ENCODE measurements at regions of chr18 and their contacts with region 1.

Region 1: DNA sequence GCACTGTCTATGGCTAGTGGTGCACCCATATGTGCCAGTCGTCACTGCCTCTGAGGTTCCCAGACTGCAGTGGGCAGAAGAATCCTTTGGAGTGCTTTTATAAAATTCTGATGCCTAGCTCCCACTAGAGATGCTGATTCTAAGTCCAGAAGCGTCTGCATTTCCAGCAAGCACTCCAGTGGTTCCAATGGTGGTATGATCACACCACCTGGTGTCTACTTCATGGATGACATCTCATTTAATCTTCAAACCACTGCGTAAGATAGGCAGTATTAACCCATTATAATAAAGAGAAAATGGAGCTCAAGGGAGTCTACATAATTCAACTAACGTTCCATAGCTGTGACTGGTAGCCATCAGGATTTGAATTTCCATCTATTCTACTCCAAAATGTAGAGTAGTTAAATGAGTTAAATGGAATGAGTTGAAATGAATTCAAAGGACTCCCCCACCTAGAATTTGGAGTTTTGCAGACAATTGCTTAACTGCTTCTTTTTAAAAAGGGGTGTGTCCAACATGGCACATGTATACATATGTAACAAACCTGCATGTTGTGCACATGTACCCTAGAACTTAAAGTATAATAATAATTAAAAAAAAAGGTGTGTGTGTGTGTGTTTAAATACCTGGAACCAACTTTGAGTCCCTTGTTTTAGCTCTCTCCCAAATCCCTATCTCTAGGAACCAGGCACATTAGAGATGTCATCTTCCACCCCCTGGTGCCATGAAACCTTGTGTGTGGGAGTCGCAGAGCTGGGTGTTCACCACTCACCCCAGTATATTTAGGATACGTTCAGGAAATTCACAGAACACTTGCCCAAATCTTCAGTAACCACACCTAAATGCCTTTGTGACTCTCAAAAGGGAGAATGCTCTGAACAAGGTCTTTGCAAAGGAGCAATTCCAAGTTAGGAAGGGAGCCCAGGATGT is 14.1 kb downstream of the LAMA3 start:
- DNase-seq: peak; percentile 43 to 79
- ATAC-seq: peak; percentile 87 to 95
- H3K4me3 ChIP-seq: no peak overlapping the region
- H3K27ac ChIP-seq: peak overlapping the region; percentile 36 to 41; a peak in 5 of 6 replicates
- H3K4me1 ChIP-seq: peaks cover 33% of the 10 kb centered on the region
- CTCF ChIP-seq: peak; percentile 73
- EP300 ChIP-seq: no peak
- POLR2A ChIP-seq: no peak
- RAD21 ChIP-seq: peak; percentile 90 to 94

Region 2: GRCh38 chr18:23515911-23516546 is 187.3 kb before region 1 on chr18:
- CTCF ChIA-PET with region 1: interaction called, 33 read pairs
- POLR2A ChIA-PET with region 1: no interaction called
- DNase-seq: peak; percentile 42 to 77
- ATAC-seq: peak; percentile 98 to 99
- H3K4me3 ChIP-seq: no peak overlapping the region
- H3K27ac ChIP-seq: no peak overlapping the region
- H3K4me1 ChIP-seq: no peaks in the 10 kb centered on the region
- CTCF ChIP-seq: peak; percentile 71
- EP300 ChIP-seq: no peak
- POLR2A ChIP-seq: no peak
- RAD21 ChIP-seq: peak; percentile 59 to 73

Region 3: DNA sequence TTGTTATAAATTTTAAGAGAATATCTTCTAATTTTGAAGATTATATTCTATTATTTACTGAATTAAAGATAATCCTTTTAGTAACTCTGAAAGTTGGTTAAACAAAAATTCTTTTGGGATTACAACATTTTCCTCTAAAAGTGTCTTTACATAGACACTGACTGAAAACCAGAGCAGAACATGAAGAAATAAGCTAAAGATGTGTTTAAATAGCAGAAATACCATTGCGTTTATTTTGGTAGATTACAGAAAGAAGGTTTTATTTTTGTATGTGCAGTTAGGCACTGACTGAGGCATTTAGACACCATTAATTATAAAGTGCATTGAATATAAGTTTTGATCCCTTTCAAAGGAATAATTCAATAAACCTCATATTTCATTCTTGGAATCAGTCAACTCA is 103.5 kb before region 1 on chr18:
- CTCF ChIA-PET with region 1: interaction called, 10 read pairs
- POLR2A ChIA-PET with region 1: no interaction called
- DNase-seq: no peak
- ATAC-seq: no peak
- H3K4me3 ChIP-seq: no peak overlapping the region
- H3K27ac ChIP-seq: no peak overlapping the region
- H3K4me1 ChIP-seq: no peaks in the 10 kb centered on the region
- CTCF ChIP-seq: no peak
- EP300 ChIP-seq: no peak
- POLR2A ChIP-seq: no peak
- RAD21 ChIP-seq: no peak

Region 4: GRCh38 chr18:23629444-23629946 is 73.8 kb before region 1 on chr18:
- CTCF ChIA-PET with region 1: interaction called, 74 read pairs
- POLR2A ChIA-PET with region 1: interaction called, 3 read pairs
- DNase-seq: peak; percentile 61 to 95
- ATAC-seq: peak; percentile 91 to 92
- H3K4me3 ChIP-seq: no peak overlapping the region
- H3K27ac ChIP-seq: peak overlapping the region; percentile 77 to 86
- H3K4me1 ChIP-seq: peaks cover 66% of the 10 kb centered on the region
- CTCF ChIP-seq: no peak
- EP300 ChIP-seq: peak; percentile 77 to 88; a peak in 3 of 5 replicates
- POLR2A ChIP-seq: no peak
- RAD21 ChIP-seq: peak; percentile 31 to 47; a peak in 4 of 5 replicates

Region 5: DNA sequence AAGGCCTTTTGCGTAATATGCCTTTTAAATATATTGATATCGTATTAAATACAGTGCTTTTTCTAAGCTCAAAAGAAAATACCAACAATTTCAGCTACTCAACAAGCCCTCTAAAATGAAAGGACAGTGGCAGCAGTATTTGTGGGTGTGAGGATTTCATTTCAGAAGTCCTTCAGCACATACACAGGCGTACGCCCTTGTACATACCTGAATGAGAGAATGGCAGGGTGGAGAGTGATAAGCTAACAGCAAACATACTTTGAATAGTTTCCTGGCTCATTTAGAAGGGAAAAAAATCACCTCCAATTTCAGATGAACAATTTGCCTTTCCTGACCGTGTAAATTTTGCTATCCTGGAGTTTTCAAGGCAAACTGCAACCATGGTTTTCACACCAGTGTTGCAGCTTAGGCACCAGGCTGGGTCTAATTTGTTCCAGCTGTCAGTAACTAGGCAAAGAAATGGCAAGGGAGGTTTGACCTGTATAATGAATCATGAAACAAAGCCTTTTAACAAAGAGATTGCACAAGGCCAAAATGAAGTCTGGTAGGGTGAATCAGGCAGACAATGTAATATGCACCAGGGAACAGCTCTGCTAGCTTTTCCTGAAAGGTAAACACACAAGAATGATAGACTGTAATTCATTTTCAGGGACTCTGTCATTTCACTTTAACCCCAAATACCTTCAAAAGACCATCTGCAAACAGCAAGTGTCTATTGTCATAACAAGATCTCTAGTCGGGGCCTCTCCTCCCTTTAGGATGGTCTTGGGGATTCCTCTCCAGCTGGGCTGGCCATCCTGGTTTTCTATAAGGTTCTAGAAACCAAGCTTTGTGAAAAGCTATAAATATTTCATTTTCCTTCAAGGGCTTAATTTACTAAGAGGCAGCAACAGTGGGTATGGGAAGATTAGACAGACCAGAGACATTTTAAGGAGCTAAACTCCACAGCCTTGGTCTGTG is 52.1 kb before region 1 on chr18:
- CTCF ChIA-PET with region 1: interaction called, 28 read pairs
- POLR2A ChIA-PET with region 1: no interaction called
- DNase-seq: peak; percentile 51 to 56
- ATAC-seq: peak; percentile 88 to 96
- H3K4me3 ChIP-seq: no peak overlapping the region
- H3K27ac ChIP-seq: peak overlapping the region; percentile 57 to 83
- H3K4me1 ChIP-seq: peaks cover 43% of the 10 kb centered on the region
- CTCF ChIP-seq: no peak
- EP300 ChIP-seq: peak; percentile 18 to 43; a peak in 2 of 5 replicates
- POLR2A ChIP-seq: no peak
- RAD21 ChIP-seq: no peak; a peak in 1 of 5 replicates

Region 6: DNA sequence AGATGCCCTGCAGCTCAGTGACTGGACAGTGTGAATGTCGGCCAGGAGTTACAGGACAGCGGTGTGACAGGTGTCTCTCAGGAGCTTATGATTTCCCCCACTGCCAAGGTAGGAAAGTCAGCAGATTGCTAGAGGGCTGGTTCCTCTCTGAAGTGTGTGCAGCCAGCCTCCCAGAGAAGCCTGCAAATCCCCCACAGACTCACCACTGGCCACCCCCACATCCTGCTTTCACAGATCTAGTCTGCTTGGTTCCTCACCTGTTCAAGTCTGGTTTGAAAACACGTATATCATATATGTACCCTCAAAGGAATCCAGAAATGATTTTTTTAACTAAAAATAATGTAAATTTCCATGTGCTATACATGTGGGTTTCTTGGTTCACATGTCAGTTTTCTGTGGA is 107.1 kb after region 1 on chr18:
- CTCF ChIA-PET with region 1: interaction called, 14 read pairs
- POLR2A ChIA-PET with region 1: no interaction called
- DNase-seq: no peak
- ATAC-seq: no peak
- H3K4me3 ChIP-seq: no peak overlapping the region
- H3K27ac ChIP-seq: no peak overlapping the region
- H3K4me1 ChIP-seq: no peaks in the 10 kb centered on the region
- CTCF ChIP-seq: no peak
- EP300 ChIP-seq: no peak
- POLR2A ChIP-seq: no peak
- RAD21 ChIP-seq: no peak